Activated CD8-positive, alpha-beta memory T cell treated with anti-CD3 and anti-CD28 coated beads, Interleukin-2, amount 10 ng/mL, durations not matched to agents 7 days and 5 days (primary cell): ENCODE measurements at regions of chr11 and their contacts with region 1.

Region 1: DNA sequence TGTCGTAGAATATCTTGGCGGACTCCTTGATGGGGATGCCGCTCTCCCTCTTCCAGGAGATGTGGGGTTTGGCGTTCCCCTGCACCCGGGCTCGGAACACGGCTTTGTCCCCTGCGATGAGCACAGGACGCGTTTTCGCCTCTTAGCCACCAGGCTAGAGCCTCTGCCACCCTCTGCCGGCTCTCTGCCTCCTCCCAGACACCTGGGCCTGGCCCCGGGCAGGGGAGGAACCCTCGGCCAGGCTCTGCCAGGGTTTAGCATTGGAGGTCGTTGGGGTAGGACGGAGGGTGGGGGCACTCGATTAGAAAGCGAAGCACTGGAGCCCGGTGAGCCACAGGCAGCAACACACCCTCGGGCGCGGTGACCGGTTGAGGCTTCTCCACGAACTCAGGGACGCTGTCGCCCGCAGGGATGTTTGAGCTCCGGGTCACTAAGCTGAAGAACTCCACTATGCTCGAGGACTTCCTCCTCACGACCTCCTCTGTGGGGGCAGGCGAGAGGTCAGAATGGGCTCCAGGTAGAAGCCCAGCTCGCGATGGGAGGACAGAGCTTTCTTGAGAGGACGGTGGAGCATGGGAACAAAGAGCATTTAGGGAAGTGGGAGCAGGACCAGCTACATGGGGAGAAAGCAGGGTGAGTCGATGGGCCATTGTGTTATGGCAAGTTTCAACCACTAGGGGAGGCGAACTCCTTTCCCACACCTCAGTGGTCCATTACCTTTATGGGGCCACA is 4.3 kb downstream of the IGSF22 start:
- DNase-seq: peak; percentile 61
- ATAC-seq: peak; percentile 58
- H3K4me3 Mint-ChIP-seq: peak overlapping the region; percentile 78
- H3K27ac Mint-ChIP-seq: no peak overlapping the region
- H3K4me1 Mint-ChIP-seq: peaks cover 8% of the 10 kb centered on the region
- H3K27me3 Mint-ChIP-seq: peaks cover 8% of the 10 kb centered on the region

Region 2: DNA sequence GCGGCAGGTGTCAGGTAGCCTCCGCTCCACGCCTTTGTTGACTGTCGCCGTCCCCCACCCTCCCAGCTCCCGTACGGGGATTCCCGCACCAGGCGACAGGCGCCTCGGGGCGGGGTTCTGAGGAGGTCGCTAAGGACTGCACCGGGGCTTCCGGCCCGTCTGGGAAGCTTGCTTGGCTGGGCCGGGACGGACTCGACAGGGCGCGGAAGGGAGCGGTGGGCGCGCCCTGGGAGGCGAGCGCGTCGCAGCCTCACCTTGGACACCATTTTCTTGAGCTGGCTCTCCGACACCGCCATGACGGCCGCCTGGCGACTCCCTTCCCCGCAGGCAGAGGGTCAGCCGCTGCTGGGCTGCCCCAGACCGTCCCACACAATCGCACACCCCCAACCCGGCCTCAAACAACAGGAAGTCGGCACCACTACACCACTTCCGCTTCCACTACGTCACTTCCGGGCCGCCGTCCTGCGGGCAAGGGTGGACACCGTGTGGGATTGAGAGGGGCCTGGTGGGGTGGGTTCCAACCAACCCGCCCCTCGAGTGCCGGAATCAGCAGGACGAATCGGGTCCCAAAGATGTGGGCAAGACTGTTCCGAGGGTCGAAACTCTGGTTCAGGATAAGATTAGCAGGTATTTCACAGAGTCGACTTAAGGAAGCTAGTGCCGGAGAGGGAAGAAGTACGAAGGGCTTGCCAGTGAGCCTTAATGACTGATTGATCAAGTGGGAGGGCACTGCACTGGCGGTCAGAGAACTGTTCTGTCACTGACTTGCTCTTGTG is 195.0 kb before region 1 on chr11 and contains the start of gene TSG101:
- CTCF ChIA-PET with region 1: interaction called, 10 read pairs
- DNase-seq: peak; percentile 94
- ATAC-seq: peak; percentile 89
- H3K4me3 Mint-ChIP-seq: peak within 1 kb of the TSS; percentile 97
- H3K27ac Mint-ChIP-seq: peak within 1 kb of the TSS; percentile 100
- H3K4me1 Mint-ChIP-seq: peaks cover 38% of the 10 kb centered on the region
- H3K27me3 Mint-ChIP-seq: peaks cover 3% of the 10 kb centered on the region
- total RNA-seq, gene TSG101: 30.5 to 42.2 TPM

Region 3: DNA sequence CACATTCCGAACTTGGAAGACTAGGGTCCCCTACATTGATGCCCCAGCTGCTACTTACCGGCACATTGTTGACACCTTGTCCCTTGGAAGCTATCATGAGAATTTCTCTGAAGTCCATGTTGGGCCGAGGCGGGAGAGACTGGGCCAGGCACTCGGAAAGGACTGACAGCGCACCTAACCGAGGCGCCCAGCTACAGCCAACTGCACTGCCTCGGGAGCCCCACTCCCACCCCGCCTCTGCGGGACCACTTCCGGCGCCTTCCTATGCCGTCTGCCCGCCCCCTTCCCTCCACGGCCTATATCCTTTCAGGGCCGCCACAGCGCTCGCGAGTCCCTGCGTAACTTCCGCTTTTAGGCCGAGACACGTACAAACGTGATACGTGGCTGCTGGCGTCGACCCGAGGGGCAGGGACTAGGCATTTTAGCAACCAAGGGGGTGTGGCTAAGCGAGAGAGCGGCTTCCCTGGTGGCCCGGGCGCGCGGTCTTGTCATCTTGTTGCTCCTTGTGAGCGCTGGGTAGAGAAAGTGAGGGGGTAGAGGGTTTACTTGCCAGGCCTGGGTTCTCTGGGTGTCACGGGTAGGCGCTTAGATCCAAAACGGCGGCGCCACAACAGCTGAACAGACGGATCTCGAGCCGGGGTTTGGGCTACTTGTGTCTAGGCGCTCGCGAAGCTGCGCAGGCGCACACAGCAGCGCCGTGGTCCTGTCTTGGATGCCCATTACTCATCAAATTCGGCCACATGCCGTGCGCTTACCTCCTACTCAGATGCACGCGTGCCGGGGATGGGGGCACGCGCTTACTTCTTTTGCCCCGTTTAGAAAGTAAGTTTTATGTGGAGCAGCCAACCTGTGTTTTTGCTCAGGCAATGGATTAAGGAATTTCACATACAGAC is 87.3 kb before region 1 on chr11 and contains the start of gene SPTY2D1:
- CTCF ChIA-PET with region 1: interaction called, 12 read pairs
- DNase-seq: peak; percentile 100
- ATAC-seq: peak; percentile 91
- H3K4me3 Mint-ChIP-seq: peak within 1 kb of the TSS; percentile 97
- H3K27ac Mint-ChIP-seq: peak within 1 kb of the TSS; percentile 99
- H3K4me1 Mint-ChIP-seq: peaks cover 23% of the 10 kb centered on the region
- H3K27me3 Mint-ChIP-seq: no peaks in the 10 kb centered on the region
- total RNA-seq, gene SPTY2D1: 23.8 to 34.7 TPM

Region 4: GRCh38 chr11:18698341-18699268 is 23.1 kb before region 1 on chr11 and contains the start of gene TMEM86A:
- CTCF ChIA-PET with region 1: interaction called, 16 read pairs
- DNase-seq: peak; percentile 93
- ATAC-seq: peak; percentile 96
- H3K4me3 Mint-ChIP-seq: peak within 1 kb of the TSS; percentile 71
- H3K27ac Mint-ChIP-seq: peak within 1 kb of the TSS; percentile 1
- H3K4me1 Mint-ChIP-seq: peaks cover 8% of the 10 kb centered on the region
- H3K27me3 Mint-ChIP-seq: peaks cover 12% of the 10 kb centered on the region
- total RNA-seq, gene TMEM86A: 0.93 to 0.98 TPM

Region 5: GRCh38 chr11:18731949-18732821 is 10.5 kb after region 1 on chr11:
- CTCF ChIA-PET with region 1: interaction called, 31 read pairs
- DNase-seq: peak; percentile 72
- ATAC-seq: peak; percentile 77
- H3K4me3 Mint-ChIP-seq: no peak overlapping the region
- H3K27ac Mint-ChIP-seq: no peak overlapping the region
- H3K4me1 Mint-ChIP-seq: peaks cover 5% of the 10 kb centered on the region
- H3K27me3 Mint-ChIP-seq: no peaks in the 10 kb centered on the region

Region 6: DNA sequence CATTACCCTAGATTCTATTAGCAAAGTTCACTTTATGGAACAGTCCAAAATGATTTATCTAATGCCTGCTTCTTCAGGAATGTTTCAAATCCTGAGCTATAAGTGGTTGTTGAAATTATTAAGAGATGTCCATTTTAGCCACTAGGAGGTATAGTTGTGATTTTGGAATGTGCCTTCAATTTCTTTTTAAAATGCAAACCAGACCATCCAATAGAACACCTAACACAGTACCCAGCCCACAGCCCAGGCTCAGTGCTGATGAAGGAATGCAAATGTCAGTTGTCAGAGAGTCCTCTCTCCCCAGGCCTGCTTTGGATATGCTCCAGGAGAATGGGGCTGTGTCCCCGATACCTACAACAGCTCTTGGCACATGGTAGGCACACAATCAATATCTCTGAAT is 604.8 kb after region 1 on chr11:
- CTCF ChIA-PET with region 1: no interaction called
- DNase-seq: no peak
- ATAC-seq: no peak
- H3K4me3 Mint-ChIP-seq: no peak overlapping the region
- H3K27ac Mint-ChIP-seq: no peak overlapping the region
- H3K4me1 Mint-ChIP-seq: no peaks in the 10 kb centered on the region
- H3K27me3 Mint-ChIP-seq: peaks cover 36% of the 10 kb centered on the region